Transverse colon (tissue), 4 donors: ENCODE measurements at regions of chr6 and their contacts with region 1.

Region 1: DNA sequence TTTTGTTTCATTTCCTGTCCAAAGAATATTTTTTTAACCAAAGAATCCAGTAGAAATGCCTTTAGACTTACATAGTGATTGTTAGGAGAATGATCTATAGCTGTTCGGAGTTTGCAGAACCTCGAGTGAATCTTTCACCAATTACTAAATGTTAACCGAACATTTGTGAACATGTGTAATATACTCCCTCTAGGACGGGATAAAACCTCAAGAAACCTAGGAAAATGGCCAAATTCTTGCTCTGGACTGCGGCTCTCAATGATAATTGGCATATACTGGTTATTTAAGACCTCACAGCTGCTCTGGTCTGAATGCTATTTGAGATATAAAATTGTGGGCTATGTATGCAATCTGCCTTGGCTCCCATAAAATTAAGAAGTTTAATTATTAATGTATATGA is 137.1 kb downstream of the PACRG start:
- DNase-seq: no peak
- H3K4me3 ChIP-seq: no peak overlapping the region
- H3K27ac ChIP-seq: no peak overlapping the region
- H3K4me1 ChIP-seq: no peaks in the 10 kb centered on the region
- H3K27me3 ChIP-seq: no peaks in the 10 kb centered on the region
- CTCF ChIP-seq: no peak
- EP300 ChIP-seq: no peak
- POLR2A ChIP-seq: no peak

Region 2: DNA sequence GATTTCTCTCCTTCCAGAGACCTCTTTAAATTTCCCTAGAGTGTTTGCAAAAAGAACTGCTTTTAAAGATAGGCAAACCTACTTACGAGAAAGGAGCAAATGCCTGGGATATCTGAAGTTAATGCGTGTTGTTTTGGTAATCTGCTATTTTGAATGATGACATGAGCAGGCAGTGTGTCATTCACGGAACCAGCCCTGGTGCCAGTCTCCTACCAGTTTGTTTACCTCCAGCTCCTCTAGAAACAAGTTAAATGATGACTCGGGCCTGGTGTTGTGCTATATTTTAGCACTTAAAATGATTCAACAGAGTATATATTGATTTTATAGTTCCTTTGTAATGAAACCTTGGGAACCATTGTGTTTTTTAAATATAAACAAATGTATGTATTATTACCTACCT is 1914.4 kb before region 1 on chr6:
- in situ Hi-C with region 1: no loop called
- intact Hi-C with region 1: loop called (anchors 5 kb)
- DNase-seq: no peak
- H3K4me3 ChIP-seq: no peak overlapping the region
- H3K27ac ChIP-seq: no peak overlapping the region
- H3K4me1 ChIP-seq: no peaks in the 10 kb centered on the region
- H3K27me3 ChIP-seq: no peaks in the 10 kb centered on the region
- CTCF ChIP-seq: no peak
- EP300 ChIP-seq: no peak
- POLR2A ChIP-seq: no peak